ENCODE measurements at regions of chr22 and their contacts with region 1.

Region 1: GRCh38 chr22:36156515-36157419 is 3.8 kb downstream of the APOL3 start:
- DNase-seq: peak; percentile 45
- H3K4me3 ChIP-seq: peak overlapping the region; percentile 33
- H3K27me3 ChIP-seq: no peaks in the 10 kb centered on the region; the same call in 1 of the 2 replicates
- CTCF ChIP-seq: no peak

Region 2: GRCh38 chr22:36073476-36073875 is 83.3 kb before region 1 on chr22:
- CTCF ChIA-PET with region 1: no interaction called
- POLR2A ChIA-PET with region 1: no interaction called
- DNase-seq: no peak
- H3K4me3 ChIP-seq: no peak overlapping the region
- H3K27me3 ChIP-seq: no peaks in the 10 kb centered on the region
- CTCF ChIP-seq: no peak

Region 3: GRCh38 chr22:36144886-36145541 is 11.8 kb before region 1 on chr22:
- CTCF ChIA-PET with region 1: interaction called, 10 read pairs
- POLR2A ChIA-PET with region 1: interaction called, 8 read pairs
- DNase-seq: no peak
- H3K4me3 ChIP-seq: no peak overlapping the region
- H3K27me3 ChIP-seq: peaks cover 3% of the 10 kb centered on the region
- CTCF ChIP-seq: peak; percentile 86

Region 4: DNA sequence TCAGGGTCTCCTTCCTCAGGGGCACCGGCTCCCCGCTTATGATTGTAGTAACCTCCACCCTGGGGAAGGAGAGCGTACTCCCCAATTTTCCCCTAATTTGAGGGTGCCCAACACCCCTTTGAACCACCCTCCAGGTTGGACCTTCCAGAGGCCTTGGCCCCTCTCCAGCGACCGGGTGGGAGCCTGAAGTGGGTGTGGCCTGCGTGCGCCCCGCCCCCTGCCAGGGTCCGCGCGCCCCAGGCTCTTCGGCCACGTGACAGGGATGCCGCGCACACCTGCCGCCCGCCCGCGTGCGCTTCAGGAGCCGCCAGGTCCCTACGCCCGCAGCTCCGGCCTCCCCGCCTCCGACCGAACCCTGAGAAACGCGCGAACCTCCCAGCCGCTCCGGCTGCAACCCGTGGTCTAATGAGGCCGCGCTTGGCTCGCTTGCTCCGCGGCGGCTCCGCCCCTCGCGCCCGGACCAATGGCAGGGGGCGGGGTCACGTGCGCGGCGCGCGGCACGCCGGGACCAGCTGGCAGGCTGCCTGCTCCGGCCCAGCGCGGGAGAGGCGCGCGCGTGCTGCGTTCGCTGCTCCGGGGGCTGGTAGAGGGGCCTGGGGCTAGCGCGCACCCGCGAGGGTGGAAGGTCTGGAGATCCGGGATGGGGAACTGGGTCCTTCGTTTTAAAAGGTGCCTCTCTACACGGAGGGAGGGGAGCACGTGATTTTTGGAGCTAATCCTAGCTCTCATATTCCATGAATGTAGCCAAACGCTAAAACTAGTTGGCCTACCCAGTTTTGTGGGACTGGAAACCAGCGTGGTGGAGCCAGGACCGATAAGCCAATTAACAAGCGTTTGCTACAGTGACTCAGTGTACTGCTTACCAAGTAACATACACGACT is 350.1 kb after region 1 on chr22 and contains the start of gene FOXRED2:
- CTCF ChIA-PET with region 1: no interaction called
- POLR2A ChIA-PET with region 1: no interaction called
- DNase-seq: no peak
- H3K4me3 ChIP-seq: peak within 1 kb of the TSS; percentile 53
- H3K27me3 ChIP-seq: no peaks in the 10 kb centered on the region
- CTCF ChIP-seq: no peak
- polyA plus RNA-seq, gene FOXRED2: 1.6 and 3.2 TPM in 2 replicates

Measured in BJ (cell line).